MCF 10A (cell line): ENCODE measurements at regions of chr3 and their contacts with region 1.

Region 1: GRCh38 chr3:11288786-11289682 is 16.8 kb downstream of the ATG7 start:
- DNase-seq: peak; percentile 93
- H3K4me3 Mint-ChIP-seq: peak overlapping the region; percentile 40
- H3K27ac Mint-ChIP-seq: peak overlapping the region; percentile 89
- H3K4me1 Mint-ChIP-seq: peaks cover 39% of the 10 kb centered on the region
- H3K27me3 Mint-ChIP-seq: no peaks in the 10 kb centered on the region
- CTCF ChIP-seq: no peak

Region 2: DNA sequence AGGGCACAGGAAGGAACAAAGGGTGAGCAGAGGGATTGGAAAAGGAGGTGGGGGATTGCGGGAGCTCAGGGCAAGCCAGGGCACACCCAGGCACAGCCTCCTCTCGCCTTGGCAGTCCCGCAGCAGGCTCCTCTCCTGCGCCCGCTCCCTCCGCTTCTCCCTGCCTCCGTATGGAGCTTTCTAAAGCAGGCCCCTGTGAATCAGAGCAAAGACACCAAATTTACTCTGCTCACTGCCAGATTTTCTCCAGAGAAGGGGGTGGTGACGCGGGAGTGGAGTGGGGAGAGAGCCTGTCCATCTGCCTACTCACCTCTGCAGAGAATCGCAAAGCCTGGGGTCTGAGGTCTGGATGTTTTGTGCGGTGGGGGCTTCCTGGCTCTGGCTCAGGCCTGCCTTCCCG is 803.7 kb before region 1 on chr3:
- CTCF ChIA-PET with region 1: no interaction called
- POLR2A ChIA-PET with region 1: no interaction called
- intact Hi-C with region 1: no loop called
- DNase-seq: no peak
- H3K4me3 Mint-ChIP-seq: no peak overlapping the region
- H3K27ac Mint-ChIP-seq: no peak overlapping the region
- H3K4me1 Mint-ChIP-seq: no peaks in the 10 kb centered on the region
- H3K27me3 Mint-ChIP-seq: peaks cover 36% of the 10 kb centered on the region
- CTCF ChIP-seq: no peak

Region 3: GRCh38 chr3:11236595-11237461 is 52.2 kb before region 1 on chr3:
- CTCF ChIA-PET with region 1: interaction called, 16 read pairs
- POLR2A ChIA-PET with region 1: interaction called, 26 read pairs
- intact Hi-C with region 1: loop called (anchors 1 kb)
- DNase-seq: peak; percentile 82
- H3K4me3 Mint-ChIP-seq: no peak overlapping the region
- H3K27ac Mint-ChIP-seq: peak overlapping the region; percentile 49
- H3K4me1 Mint-ChIP-seq: peaks cover 26% of the 10 kb centered on the region
- H3K27me3 Mint-ChIP-seq: no peaks in the 10 kb centered on the region
- CTCF ChIP-seq: peak; percentile 95

Region 4: GRCh38 chr3:11477407-11477911 is 188.4 kb after region 1 on chr3:
- CTCF ChIA-PET with region 1: no interaction called
- POLR2A ChIA-PET with region 1: no interaction called
- intact Hi-C with region 1: no loop called
- DNase-seq: peak; percentile 29
- H3K4me3 Mint-ChIP-seq: no peak overlapping the region
- H3K27ac Mint-ChIP-seq: peak overlapping the region; percentile 71
- H3K4me1 Mint-ChIP-seq: peaks cover 25% of the 10 kb centered on the region
- H3K27me3 Mint-ChIP-seq: no peaks in the 10 kb centered on the region
- CTCF ChIP-seq: no peak